Uterus (tissue), 4 donors: ENCODE measurements at regions of chr16 and their contacts with region 1.

Region 1: GRCh38 chr16:50425648-50426047 is 56.9 kb upstream of the BRD7 start:
- DNase-seq: no peak
- H3K4me3 ChIP-seq: no peak overlapping the region
- H3K27ac ChIP-seq: no peak overlapping the region
- H3K4me1 ChIP-seq: no peaks in the 10 kb centered on the region
- H3K27me3 ChIP-seq: no peaks in the 10 kb centered on the region
- CTCF ChIP-seq: no peak
- POLR2A ChIP-seq: no peak

Region 2: GRCh38 chr16:50399411-50399810 is 26.2 kb before region 1 on chr16:
- intact Hi-C with region 1: loop called (anchors 2 kb)
- DNase-seq: no peak
- H3K4me3 ChIP-seq: no peak overlapping the region
- H3K27ac ChIP-seq: no peak overlapping the region
- H3K4me1 ChIP-seq: no peaks in the 10 kb centered on the region
- H3K27me3 ChIP-seq: no peaks in the 10 kb centered on the region
- CTCF ChIP-seq: no peak
- POLR2A ChIP-seq: no peak